H1 (cell line): ENCODE measurements at regions of chr11 and their contacts with region 1.

Region 1: DNA sequence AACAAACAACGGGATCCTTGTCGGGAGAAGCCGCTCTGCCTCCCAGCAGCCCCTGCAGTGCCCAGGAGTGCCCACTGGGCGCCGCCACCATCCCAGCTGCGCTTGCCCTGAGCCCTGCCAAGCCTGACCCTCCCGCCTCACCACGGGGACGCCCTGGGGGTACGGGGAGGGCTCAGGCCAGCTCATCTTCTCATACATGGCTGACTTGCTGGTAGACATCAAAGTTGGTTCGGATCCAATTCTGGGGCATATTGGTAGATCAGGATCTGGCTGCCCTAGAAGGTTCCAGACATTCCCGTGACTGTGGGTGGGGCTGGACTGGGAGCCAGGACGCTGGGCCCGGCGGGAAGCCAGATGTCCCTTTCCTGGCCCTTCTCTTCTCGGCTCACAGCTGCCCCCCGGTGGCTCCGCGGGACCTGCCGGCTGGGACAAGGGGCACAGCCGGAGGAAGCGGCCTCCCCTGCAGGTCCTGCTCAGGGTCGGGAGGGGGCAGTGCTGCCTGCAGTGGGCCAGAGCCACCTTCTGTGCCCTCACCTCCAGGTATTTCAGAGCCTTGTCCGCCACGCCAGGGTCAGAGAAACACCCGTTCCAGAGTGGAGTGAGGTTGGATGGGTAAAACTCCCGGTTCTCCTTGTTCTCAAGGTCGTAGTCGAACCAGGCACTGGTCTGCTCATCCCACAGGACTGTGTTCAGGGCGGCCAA is 10.6 kb upstream of the TREH start:
- DNase-seq: peak; percentile 90 to 99
- H3K4me3 ChIP-seq: peak overlapping the region in 3 of 4 experiments; percentile 54 to 56 (median 54); a peak in 7 of 8 replicates
- H3K27ac ChIP-seq: peak overlapping the region; percentile 43; the same call in 1 of the 2 replicates
- H3K4me1 ChIP-seq: peaks cover 0 to 19% (median 11%) of the 10 kb centered on the region in 4 experiments; a peak in 6 of 7 replicates
- H3K27me3 ChIP-seq: no peaks in the 10 kb centered on the region
- CTCF ChIP-seq: peak; percentile 96 to 100 (median 97)
- EP300 ChIP-seq: no peak
- POLR2A ChIP-seq: no peak
- RAD21 ChIP-seq: peak; percentile 89 to 92

Region 2: DNA sequence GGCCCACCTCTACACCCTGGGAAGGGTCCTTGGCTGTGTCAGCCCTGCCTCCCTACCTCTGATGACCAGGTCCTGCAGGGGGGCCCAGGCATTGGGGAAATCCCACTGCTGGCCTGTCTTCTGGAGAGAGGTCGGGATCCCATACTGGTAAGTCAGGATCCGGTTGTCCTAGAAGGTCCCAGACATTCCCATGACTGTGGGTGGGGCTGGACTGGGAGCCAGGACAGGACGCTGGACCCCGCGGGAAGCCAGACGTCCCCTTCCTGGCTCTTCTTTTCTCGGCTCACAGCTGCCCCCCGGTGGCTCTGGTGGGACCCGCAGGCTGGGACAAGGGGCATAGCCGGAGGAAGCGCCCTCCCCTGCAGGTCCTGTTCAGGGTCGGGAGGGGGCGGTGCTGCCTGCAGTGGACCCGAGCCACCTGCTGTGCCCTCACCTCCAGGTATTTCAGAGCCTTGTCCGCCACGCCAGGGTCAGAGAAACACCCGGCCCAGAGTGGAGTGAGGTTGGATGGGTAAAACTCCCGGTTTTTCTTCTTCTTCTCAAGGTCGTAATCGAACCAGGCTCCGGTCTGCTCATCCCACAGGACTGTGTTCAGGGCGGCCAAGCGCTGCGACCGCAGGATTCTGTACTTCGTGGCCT is 30.6 kb before region 1 on chr11:
- CTCF ChIA-PET with region 1: interaction called, 30 read pairs
- POLR2A ChIA-PET with region 1: interaction called, 5 read pairs
- DNase-seq: peak; percentile 88 to 100
- H3K4me3 ChIP-seq: no peak overlapping the region
- H3K27ac ChIP-seq: no peak overlapping the region
- H3K4me1 ChIP-seq: peaks cover 0 to 27% (median 22%) of the 10 kb centered on the region in 4 experiments; a peak in 6 of 7 replicates
- H3K27me3 ChIP-seq: no peaks in the 10 kb centered on the region
- CTCF ChIP-seq: peak; percentile 90 to 99 (median 99)
- EP300 ChIP-seq: peak in 1 of 2 experiments; percentile 55; a peak in 1 of 3 replicates
- POLR2A ChIP-seq: no peak
- RAD21 ChIP-seq: peak; percentile 86 to 88

Region 3: GRCh38 chr11:118705111-118705741 is 15.2 kb after region 1 on chr11:
- CTCF ChIA-PET with region 1: interaction called, 39 read pairs
- POLR2A ChIA-PET with region 1: interaction called, 6 read pairs
- DNase-seq: no peak
- H3K4me3 ChIP-seq: no peak overlapping the region
- H3K27ac ChIP-seq: no peak overlapping the region
- H3K4me1 ChIP-seq: peaks cover 0 to 9% (median 4%) of the 10 kb centered on the region in 4 experiments; a peak in 3 of 7 replicates
- H3K27me3 ChIP-seq: no peaks in the 10 kb centered on the region
- CTCF ChIP-seq: no peak
- EP300 ChIP-seq: no peak
- POLR2A ChIP-seq: no peak
- RAD21 ChIP-seq: no peak

Region 4: DNA sequence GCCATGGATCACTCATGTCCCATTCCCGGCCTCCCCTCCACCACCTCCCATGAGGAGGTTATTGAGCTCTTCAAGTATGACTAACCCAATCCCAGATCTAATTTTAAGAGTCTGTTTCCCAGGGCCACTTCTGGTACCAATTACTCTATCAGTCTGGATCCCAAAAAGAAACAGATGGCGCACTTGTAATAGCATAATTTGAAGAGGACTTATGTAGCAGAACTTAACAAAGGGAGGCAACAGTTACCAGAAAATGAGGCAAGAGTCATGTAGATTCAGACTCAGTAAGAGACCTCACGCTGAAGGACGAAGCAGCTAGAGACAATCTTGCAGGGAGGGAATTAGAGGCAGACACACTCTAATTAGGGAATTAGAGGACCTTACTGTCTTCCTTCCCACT is 54.0 kb after region 1 on chr11:
- CTCF ChIA-PET with region 1: interaction called, 102 read pairs
- POLR2A ChIA-PET with region 1: interaction called, 9 read pairs
- DNase-seq: no peak
- H3K4me3 ChIP-seq: no peak overlapping the region
- H3K27ac ChIP-seq: no peak overlapping the region
- H3K4me1 ChIP-seq: peaks cover 0 to 8% (median 4%) of the 10 kb centered on the region in 4 experiments; a peak in 3 of 7 replicates
- H3K27me3 ChIP-seq: no peaks in the 10 kb centered on the region
- CTCF ChIP-seq: no peak
- EP300 ChIP-seq: no peak
- POLR2A ChIP-seq: no peak
- RAD21 ChIP-seq: no peak

Region 5: GRCh38 chr11:118757876-118758399 is 67.9 kb after region 1 on chr11:
- CTCF ChIA-PET with region 1: interaction called, 85 read pairs
- POLR2A ChIA-PET with region 1: interaction called, 36 read pairs
- DNase-seq: no peak
- H3K4me3 ChIP-seq: no peak overlapping the region
- H3K27ac ChIP-seq: no peak overlapping the region
- H3K4me1 ChIP-seq: no peaks in the 10 kb centered on the region
- H3K27me3 ChIP-seq: no peaks in the 10 kb centered on the region
- CTCF ChIP-seq: no peak
- EP300 ChIP-seq: no peak
- POLR2A ChIP-seq: no peak
- RAD21 ChIP-seq: no peak

Region 6: DNA sequence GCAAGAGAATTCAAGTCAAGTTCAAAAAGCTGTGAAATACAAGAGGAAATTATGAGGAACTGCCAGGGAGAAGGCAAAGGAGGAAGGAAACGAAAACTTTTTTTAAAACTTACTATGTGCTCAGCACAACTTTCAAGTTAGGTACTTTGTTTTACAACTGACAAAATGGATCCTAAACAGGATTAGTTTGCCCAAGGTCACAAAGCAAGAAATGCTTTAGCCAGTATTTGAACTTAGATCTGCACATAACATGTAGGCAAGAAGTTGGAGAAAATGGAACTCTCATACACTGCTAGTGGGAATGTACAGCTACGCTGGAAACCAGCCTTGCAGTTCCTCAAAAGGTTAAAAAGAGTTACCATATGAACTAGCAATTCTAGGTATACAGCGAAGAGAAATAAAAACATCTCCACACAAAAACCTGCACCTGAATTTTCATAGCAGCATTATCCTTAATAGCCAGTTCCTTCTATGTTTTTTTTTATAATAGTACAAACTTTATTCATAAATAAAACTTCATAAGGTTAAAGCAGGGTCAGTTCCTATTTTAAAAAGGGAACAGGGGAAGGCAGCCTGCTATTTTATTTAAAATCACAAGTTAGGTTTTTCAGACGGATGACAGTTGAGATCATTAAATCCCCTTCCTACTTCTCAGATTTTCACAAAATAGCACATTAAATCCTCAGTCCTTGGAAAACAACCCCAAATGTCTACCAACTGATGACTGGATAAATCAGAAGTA is 81.7 kb after region 1 on chr11:
- CTCF ChIA-PET with region 1: interaction called, 20 read pairs
- POLR2A ChIA-PET with region 1: no interaction called
- DNase-seq: no peak
- H3K4me3 ChIP-seq: no peak overlapping the region
- H3K27ac ChIP-seq: no peak overlapping the region
- H3K4me1 ChIP-seq: no peaks in the 10 kb centered on the region
- H3K27me3 ChIP-seq: no peaks in the 10 kb centered on the region
- CTCF ChIP-seq: no peak
- EP300 ChIP-seq: no peak
- POLR2A ChIP-seq: no peak
- RAD21 ChIP-seq: no peak

Region 7: GRCh38 chr11:118895142-118896039 is 205.4 kb after region 1 on chr11:
- CTCF ChIA-PET with region 1: interaction called, 15 read pairs
- POLR2A ChIA-PET with region 1: no interaction called
- DNase-seq: no peak
- H3K4me3 ChIP-seq: no peak overlapping the region
- H3K27ac ChIP-seq: no peak overlapping the region; the same call in 1 of the 2 replicates
- H3K4me1 ChIP-seq: peaks cover 3 to 44% (median 26%) of the 10 kb centered on the region in 4 experiments
- H3K27me3 ChIP-seq: peaks cover 0 to 3% (median 0%) of the 10 kb centered on the region in 4 experiments; a peak in 1 of 7 replicates
- CTCF ChIP-seq: no peak
- EP300 ChIP-seq: no peak
- POLR2A ChIP-seq: no peak; a peak in 2 of 3 replicates
- RAD21 ChIP-seq: no peak